ENCODE measurements at regions of chr19 and their contacts with region 1.

Region 1: GRCh38 chr19:42497492-42498168 is 30.7 kb downstream of the CEACAM1 start:
- DNase-seq: no peak
- ATAC-seq: no peak
- H3K4me3 ChIP-seq: no peak overlapping the region
- H3K27ac ChIP-seq: no peak overlapping the region
- H3K4me1 ChIP-seq: no peaks in the 10 kb centered on the region
- H3K27me3 ChIP-seq: peaks cover 16% of the 10 kb centered on the region
- CTCF ChIP-seq: no peak
- POLR2A ChIP-seq: no peak
- RAD21 ChIP-seq: no peak

Region 2: DNA sequence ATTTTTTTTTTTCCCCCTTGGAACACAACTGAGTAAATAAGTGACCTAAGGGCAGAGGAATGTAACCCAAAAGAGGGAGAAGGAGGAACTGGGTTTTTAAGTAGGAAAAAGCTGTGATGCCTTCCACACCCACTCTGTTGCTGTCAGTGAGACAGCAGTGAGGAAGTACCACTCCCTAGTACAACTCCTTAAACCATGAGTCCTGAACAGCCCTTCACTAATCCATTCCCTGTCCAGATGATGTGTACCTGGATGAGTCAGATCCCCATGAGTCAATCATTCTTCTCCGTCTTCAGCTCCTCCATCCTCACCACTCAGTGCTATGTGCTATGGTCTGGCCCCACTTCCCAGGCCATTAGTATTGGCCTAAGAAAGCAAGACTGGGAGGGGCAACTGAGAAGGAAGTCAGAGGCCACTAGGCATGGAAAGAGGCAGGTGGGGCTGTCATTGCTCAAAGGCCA is 42.0 kb before region 1 on chr19:
- CTCF ChIA-PET with region 1: no interaction called
- POLR2A ChIA-PET with region 1: interaction called, 28 read pairs
- dilution Hi-C with region 1: no loop called
- in situ Hi-C with region 1: no loop called
- intact Hi-C with region 1: no loop called
- DNase-seq: no peak
- ATAC-seq: no peak
- H3K4me3 ChIP-seq: no peak overlapping the region
- H3K27ac ChIP-seq: no peak overlapping the region
- H3K4me1 ChIP-seq: no peaks in the 10 kb centered on the region
- H3K27me3 ChIP-seq: peaks cover 22% of the 10 kb centered on the region
- CTCF ChIP-seq: no peak
- POLR2A ChIP-seq: no peak
- RAD21 ChIP-seq: no peak